PC-9 (cell line): ENCODE measurements at regions of chr15 and their contacts with region 1.

Region 1: DNA sequence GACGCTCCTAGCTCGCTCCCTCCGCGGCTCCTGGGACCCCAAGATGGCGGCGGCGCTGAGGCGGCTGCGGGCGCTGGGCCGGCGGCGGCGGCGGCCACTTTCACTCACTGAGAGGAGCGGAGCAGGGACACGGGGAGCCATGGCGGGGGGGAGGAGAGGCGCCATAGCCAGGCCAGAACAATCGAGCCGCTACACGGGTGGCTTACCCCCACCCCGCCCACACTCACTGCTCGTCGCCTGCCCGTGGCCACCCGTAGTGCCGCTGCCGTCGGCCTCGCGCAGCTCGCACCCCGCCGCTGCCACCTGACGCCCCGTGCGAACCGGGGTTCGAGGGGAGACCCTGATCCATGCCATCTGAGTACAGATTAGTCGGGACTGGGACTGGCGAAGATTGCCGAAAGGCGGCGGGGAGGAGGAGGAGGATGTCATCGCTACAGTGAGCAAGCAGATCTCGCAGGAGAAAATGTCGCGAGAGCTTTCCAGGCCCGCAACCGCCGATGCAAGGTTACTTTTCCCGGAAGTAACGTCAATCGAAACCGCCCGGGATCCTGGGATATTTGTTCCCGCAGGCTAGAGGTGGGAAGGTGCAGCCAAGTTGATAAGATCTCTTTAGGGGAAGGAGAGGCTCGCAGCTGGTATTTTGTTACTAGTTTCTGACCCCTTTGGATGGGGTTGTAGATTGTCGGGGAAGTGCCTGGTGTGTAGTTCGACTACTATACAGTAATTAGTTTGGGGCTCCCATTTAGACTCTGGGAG is at the start of gene INO80:
- DNase-seq: peak; percentile 91 to 96
- H3K4me3 ChIP-seq: peak within 1 kb of the TSS; percentile 90
- H3K27ac ChIP-seq: peak within 1 kb of the TSS; percentile 98
- H3K4me1 ChIP-seq: peaks cover 6% of the 10 kb centered on the region; the same call in 1 of the 2 replicates
- H3K27me3 ChIP-seq: no peaks in the 10 kb centered on the region
- CTCF ChIP-seq: no peak
- total RNA-seq, gene INO80: 11.3 and 18.8 TPM in 2 replicates

Region 2: DNA sequence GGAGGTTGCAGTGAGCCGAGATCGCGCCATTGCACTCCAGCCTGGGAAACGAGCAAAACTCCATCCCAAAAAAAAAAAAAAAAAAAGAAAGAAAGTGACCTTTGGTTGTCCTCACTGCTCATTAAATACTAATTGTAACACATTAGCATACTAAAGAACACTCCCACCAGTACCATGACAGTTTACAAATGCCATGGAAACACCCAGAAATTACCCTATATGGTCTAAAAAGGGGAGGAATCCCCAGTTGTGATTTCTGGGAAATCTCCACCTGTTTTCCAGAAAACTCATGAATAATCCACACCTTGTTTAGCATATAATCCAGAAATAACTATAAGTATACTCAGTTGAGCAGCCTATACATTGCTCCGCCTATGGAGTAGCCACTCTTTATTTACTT is 23.3 kb after region 1 on chr15:
- CTCF ChIA-PET with region 1: no interaction called
- POLR2A ChIA-PET with region 1: no interaction called
- intact Hi-C with region 1: loop called (anchors 1 kb)
- DNase-seq: no peak
- H3K4me3 ChIP-seq: no peak overlapping the region
- H3K27ac ChIP-seq: peak overlapping the region; percentile 41
- H3K4me1 ChIP-seq: peaks cover 12% of the 10 kb centered on the region
- H3K27me3 ChIP-seq: no peaks in the 10 kb centered on the region
- CTCF ChIP-seq: no peak

Region 3: GRCh38 chr15:41180206-41180789 is 64.0 kb after region 1 on chr15:
- CTCF ChIA-PET with region 1: interaction called, 3 read pairs
- POLR2A ChIA-PET with region 1: interaction called, 3 read pairs
- intact Hi-C with region 1: loop called (anchors 5 kb)
- DNase-seq: no peak
- H3K4me3 ChIP-seq: no peak overlapping the region
- H3K27ac ChIP-seq: no peak overlapping the region
- H3K4me1 ChIP-seq: peaks cover 9% of the 10 kb centered on the region
- H3K27me3 ChIP-seq: no peaks in the 10 kb centered on the region
- CTCF ChIP-seq: no peak

Region 4: DNA sequence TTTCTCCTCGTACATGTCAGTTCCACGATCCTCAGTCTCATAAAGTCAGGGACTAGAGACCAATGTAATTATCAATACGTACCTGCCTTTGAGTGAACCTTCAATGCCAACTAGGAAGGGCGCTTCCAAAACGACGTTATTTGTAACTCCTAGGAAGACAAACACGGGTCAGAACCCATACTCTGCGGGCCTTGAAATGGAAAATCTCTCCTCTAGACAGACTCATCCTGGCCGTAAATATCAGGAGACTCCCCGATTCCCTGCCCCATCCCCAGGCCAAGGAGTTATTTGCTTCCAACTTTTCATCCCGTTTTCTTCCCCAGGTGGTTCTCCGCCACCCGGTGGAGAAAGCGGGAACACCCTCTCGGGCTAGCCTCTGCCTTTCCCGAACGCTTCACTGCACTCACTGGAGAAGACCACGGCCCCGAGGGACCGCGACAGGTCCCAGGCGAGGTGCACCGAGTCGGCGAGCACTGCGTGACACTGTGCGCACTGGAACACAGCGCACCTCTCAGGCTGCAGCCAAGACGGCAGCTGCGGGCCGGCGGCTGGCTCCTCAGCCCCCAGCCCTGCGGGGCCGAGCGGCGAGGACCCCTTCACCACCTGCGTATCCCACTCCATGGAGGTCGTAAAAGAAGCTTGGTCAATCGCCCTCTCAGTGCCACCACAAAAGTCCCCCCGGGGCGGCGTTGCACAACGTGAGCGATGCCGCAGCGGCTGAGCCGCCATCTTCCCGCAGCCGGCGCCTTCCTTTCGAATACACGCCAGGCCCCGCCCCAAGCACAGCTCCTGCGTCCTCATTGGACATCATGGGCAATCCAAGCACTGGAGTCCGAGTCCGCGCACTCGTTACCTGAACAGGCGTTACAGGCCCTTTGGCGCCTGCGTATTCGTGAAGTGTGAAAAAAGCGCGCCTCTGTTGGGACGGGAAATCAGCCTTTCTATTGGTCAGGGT is 215.8 kb after region 1 on chr15 and contains the start of gene OIP5:
- CTCF ChIA-PET with region 1: no interaction called
- POLR2A ChIA-PET with region 1: interaction called, 6 read pairs
- intact Hi-C with region 1: loop called (anchors 2 kb)
- DNase-seq: peak; percentile 97 to 98
- H3K4me3 ChIP-seq: peak within 1 kb of the TSS; percentile 85
- H3K27ac ChIP-seq: peak within 1 kb of the TSS; percentile 58
- H3K4me1 ChIP-seq: peaks cover 22% of the 10 kb centered on the region; the same call in 1 of the 2 replicates
- H3K27me3 ChIP-seq: no peaks in the 10 kb centered on the region
- CTCF ChIP-seq: peak; percentile 73
- total RNA-seq, gene OIP5: 23.9 and 25.4 TPM in 2 replicates